ENCODE measurements at regions of chr9 and their contacts with region 1.

Region 1: GRCh38 chr9:105244003-105244733 is at the start of gene SLC44A1:
- DNase-seq: peak; percentile 93
- H3K4me3 Mint-ChIP-seq: peak within 1 kb of the TSS; percentile 88
- H3K27ac Mint-ChIP-seq: peak within 1 kb of the TSS; percentile 69
- H3K4me1 Mint-ChIP-seq: peaks cover 31% of the 10 kb centered on the region
- H3K27me3 Mint-ChIP-seq: peaks cover 62% of the 10 kb centered on the region
- total RNA-seq, gene SLC44A1: 3.7 and 3.8 TPM in 2 replicates

Region 2: DNA sequence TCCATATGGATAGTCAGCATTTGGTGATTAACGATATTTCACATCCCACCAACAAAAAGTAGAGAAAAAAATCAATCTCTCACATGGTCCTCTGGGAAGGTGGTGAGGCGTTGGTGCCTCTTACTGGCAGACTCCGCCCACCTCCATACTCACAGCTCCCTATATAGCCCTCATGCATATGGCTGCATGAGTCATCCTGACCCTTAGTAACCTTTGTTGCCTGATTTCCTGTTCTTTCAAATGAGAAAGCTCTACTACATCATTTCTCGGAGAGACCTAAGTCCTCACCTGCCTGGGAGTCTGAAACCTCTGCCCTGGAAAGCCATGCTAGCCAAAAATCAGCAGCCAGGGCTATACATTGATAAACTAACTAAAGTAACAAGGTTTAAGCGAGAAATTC is 282.9 kb before region 1 on chr9:
- intact Hi-C with region 1: loop called (anchors 2 kb)
- DNase-seq: peak; percentile 62
- H3K4me3 Mint-ChIP-seq: peak overlapping the region; percentile 19
- H3K27ac Mint-ChIP-seq: peak overlapping the region; percentile 41
- H3K4me1 Mint-ChIP-seq: peaks cover 47% of the 10 kb centered on the region
- H3K27me3 Mint-ChIP-seq: no peaks in the 10 kb centered on the region

Region 3: GRCh38 chr9:105259731-105260612 is 15.8 kb after region 1 on chr9:
- intact Hi-C with region 1: loop called (anchors 2 kb)
- DNase-seq: no peak
- H3K4me3 Mint-ChIP-seq: no peak overlapping the region
- H3K27ac Mint-ChIP-seq: no peak overlapping the region
- H3K4me1 Mint-ChIP-seq: peaks cover 35% of the 10 kb centered on the region
- H3K27me3 Mint-ChIP-seq: no peaks in the 10 kb centered on the region

Region 4: DNA sequence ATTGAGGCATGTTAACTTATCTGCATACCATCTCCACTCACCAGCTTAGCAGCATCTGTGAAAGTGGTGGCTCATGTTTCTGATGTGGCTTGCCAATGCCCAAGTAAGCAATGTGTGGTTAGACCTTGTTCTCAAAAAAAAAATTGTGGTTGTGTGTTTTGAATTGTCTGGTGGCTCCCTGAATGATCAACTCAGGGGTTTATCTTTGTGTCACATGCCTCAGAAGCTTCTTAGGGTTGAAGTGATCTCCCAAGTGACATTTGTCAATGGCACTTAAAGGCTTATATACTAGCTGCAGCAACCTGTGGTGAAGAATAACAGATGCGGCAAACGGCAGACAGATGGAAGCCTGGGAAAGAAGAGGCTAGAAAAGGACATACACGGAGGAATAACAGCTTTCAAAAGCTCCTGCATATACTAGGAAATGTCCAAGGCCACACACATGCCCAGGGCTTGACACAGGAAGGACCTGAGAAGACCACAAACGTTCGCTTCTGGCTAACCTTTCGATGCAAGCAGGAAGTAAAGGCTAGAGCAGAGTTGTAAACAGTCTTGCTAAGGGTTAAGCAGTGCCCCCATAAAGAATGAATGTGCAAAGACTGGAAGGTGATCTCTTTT is 161.5 kb after region 1 on chr9:
- intact Hi-C with region 1: loop called (anchors 1 kb)
- DNase-seq: peak; percentile 61
- H3K4me3 Mint-ChIP-seq: peak overlapping the region; percentile 23
- H3K27ac Mint-ChIP-seq: peak overlapping the region; percentile 90
- H3K4me1 Mint-ChIP-seq: peaks cover 31% of the 10 kb centered on the region
- H3K27me3 Mint-ChIP-seq: peaks cover 66% of the 10 kb centered on the region

Region 5: GRCh38 chr9:105447814-105448812 is 203.9 kb after region 1 on chr9 and contains the start of gene FSD1L:
- intact Hi-C with region 1: loop called (anchors 1 kb)
- DNase-seq: peak; percentile 80
- H3K4me3 Mint-ChIP-seq: peak within 1 kb of the TSS; percentile 87
- H3K27ac Mint-ChIP-seq: peak within 1 kb of the TSS; percentile 75
- H3K4me1 Mint-ChIP-seq: peaks cover 17% of the 10 kb centered on the region
- H3K27me3 Mint-ChIP-seq: peaks cover 9% of the 10 kb centered on the region
- total RNA-seq, gene FSD1L: 3.4 and 3.5 TPM in 2 replicates

Region 6: GRCh38 chr9:105694190-105694847 is 450.2 kb after region 1 on chr9 and contains the start of gene TMEM38B:
- intact Hi-C with region 1: loop called (anchors 2 kb)
- DNase-seq: peak; percentile 77
- H3K4me3 Mint-ChIP-seq: peak within 1 kb of the TSS; percentile 87
- H3K27ac Mint-ChIP-seq: peak within 1 kb of the TSS; percentile 61
- H3K4me1 Mint-ChIP-seq: peaks cover 26% of the 10 kb centered on the region
- H3K27me3 Mint-ChIP-seq: peaks cover 24% of the 10 kb centered on the region
- total RNA-seq, gene TMEM38B: 11.9 and 13.8 TPM in 2 replicates

Measured in activated T-helper 1 cell treated with anti-CD3 and anti-CD28 coated beads, Interleukin-12 subunit alpha, Interleukin-12 subunit beta, Interleukin-2, Interleukin-4 antibody, amounts not matched to agents 30 ng/mL and 10 ng/mL and 1 ng/mL, durations not matched to agents 14 hours and 24 hours and 36 hours (primary cell).